BJ (cell line): ENCODE measurements at regions of chr2 and their contacts with region 1.

Region 1: DNA sequence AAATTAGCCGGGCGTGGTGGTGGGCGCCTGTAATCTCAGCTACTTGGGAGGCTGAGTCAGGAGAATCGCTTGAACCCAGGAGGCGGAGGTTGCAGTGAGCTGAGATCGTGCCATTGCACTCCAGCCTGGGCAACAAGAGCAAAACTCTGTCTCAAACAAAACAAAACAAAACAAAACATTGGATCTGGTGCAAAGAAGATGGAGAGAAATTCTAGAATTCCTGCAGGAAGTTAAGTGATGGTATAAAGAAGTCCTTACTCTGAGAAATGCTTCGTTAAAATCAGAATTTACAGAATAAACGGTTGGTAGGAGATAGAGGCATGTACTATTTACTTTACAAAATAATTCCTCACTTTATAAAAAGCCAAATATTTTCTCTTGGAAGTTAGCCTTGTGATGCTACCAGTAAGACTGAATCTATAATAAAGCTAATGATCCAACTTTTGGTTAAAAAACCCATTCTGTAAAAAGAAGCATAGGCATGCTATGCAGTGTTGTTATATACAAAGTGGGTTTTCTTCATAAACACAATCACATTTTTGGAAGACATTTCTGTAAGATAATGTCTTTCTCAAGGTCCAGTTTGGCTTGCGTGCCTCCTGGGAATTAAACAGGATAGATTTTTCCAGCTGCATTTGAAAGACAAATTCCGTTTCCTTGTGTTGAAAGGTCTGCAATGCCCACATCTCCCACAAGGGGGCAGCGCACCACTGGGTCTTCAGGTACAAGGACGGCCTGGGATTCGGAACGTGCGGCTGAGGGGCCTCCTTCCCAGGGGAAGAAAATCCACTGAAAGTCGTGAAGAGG is 35.6 kb upstream of the PNO1 start:
- DNase-seq: peak; percentile 31
- H3K4me3 ChIP-seq: no peak overlapping the region
- H3K27me3 ChIP-seq: no peaks in the 10 kb centered on the region
- CTCF ChIP-seq: peak; percentile 97

Region 2: DNA sequence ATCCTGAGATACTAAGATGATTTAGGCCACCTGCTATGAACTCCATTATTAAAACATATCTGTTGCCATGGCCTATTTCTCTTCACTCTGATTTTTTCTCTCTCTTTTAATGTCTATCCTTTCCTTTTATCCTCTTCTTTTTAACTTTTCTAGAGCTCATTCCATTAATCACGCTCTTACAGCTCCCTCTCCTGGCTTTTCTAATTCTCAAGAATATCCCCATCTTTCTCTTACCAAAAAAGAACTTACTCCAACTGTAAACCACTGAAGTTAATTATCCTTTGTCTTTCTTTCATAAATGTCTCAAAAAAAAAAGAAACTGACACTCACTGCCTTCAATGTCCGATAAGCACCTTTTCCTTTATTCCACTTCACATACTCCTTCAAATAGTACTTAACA is 122.4 kb after region 1 on chr2:
- CTCF ChIA-PET with region 1: interaction called, 12 read pairs
- POLR2A ChIA-PET with region 1: no interaction called
- DNase-seq: no peak
- H3K4me3 ChIP-seq: no peak overlapping the region
- H3K27me3 ChIP-seq: no peaks in the 10 kb centered on the region
- CTCF ChIP-seq: peak; percentile 23; the same call in 1 of the 2 replicates

Region 3: DNA sequence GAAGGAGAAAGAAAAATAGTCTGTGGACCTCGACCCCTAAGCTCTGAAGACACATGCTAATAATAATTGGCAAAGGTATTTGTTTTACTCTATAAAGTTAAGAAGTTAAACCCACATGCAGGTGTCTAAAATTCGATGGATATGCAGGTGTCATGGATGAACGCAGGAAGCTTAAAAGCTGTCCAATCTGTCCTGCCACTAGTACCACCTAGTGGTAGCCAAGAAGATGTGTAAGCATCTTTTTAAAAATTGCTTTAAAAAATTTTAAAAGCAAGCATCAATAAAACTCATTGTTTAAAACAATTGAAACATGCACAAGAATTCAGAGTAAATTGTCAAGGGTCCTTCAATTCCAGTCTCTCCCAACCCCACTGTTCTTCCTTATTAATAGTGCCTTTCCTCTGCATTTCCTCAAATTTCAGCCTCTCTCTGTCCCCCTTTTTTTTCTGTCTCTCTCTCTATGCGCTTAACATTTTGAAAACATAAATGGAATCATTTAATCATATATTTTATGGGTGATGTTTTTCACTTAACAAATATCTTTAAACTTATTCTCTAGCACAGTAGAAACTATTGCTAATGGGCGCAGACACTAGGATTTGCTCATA is 160.8 kb after region 1 on chr2:
- CTCF ChIA-PET with region 1: interaction called, 19 read pairs
- POLR2A ChIA-PET with region 1: no interaction called
- DNase-seq: no peak
- H3K4me3 ChIP-seq: no peak overlapping the region
- H3K27me3 ChIP-seq: no peaks in the 10 kb centered on the region
- CTCF ChIP-seq: peak; percentile 80

Region 4: GRCh38 chr2:68290901-68291300 is 168.8 kb after region 1 on chr2:
- CTCF ChIA-PET with region 1: interaction called, 21 read pairs
- POLR2A ChIA-PET with region 1: no interaction called
- DNase-seq: no peak
- H3K4me3 ChIP-seq: no peak overlapping the region
- H3K27me3 ChIP-seq: no peaks in the 10 kb centered on the region
- CTCF ChIP-seq: no peak

Region 5: DNA sequence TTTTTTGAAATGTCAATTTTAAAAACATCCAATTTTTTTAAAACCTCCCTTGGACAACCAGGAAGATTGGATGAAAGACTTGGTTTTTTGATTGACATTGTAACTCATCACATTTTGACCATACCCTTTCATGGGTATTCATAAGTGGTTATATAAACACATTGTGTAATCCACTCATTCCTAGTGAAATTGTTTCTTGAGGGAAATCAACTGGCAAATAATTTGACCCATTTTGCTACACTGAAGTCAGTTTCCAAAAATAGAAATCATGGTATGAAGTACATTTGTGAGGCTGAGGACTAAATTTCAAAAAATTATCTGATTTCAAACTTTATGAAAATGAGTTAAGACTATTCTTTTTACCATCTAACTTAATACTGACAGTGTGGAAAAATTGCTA is 313.5 kb after region 1 on chr2:
- CTCF ChIA-PET with region 1: interaction called, 97 read pairs
- POLR2A ChIA-PET with region 1: no interaction called
- DNase-seq: no peak
- H3K4me3 ChIP-seq: no peak overlapping the region
- H3K27me3 ChIP-seq: peaks cover 2% of the 10 kb centered on the region
- CTCF ChIP-seq: no peak

Region 6: DNA sequence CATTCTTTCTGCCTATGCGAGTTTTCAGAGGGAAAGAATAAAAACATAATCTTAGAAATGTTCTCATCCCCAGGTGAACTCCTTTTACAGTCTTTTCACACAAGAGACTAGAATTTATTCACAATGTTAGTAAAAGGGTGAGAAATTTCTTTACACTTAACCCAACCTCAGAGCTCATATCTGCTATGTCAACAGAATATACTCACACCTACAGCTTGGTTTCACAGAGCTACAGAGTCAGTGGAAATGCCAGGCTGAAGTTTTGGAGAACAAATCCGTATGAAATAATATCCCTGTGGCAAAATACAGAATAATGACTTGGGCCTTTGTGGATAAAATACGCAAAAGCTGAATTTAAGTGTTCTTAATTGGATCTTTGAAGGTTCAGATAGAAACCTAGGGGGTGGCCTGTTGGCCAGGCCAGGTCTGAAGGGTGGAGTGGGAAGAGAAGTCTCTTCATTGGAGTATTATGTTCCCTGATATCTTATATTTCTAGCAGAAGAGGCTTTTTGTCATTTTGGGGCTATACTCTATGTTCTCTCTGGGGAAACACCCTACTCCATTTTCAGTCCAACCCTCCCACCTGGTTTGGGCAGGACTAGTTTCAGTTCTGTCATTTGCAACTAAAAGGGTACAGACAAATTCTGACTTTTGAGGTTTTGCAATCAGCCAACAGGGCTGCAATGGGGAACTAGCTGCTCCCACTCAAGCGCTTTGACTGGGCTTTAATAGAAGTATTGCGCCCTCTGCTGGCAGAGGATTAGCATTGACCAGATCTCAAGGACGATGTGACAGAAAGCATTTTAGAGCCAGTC is 319.3 kb after region 1 on chr2:
- CTCF ChIA-PET with region 1: interaction called, 97 read pairs
- POLR2A ChIA-PET with region 1: no interaction called
- DNase-seq: no peak
- H3K4me3 ChIP-seq: no peak overlapping the region
- H3K27me3 ChIP-seq: peaks cover 5% of the 10 kb centered on the region; the same call in 1 of the 2 replicates
- CTCF ChIP-seq: peak; percentile 86